AG04449 (cell line): ENCODE measurements at regions of chr19 and their contacts with region 1.

Region 1: DNA sequence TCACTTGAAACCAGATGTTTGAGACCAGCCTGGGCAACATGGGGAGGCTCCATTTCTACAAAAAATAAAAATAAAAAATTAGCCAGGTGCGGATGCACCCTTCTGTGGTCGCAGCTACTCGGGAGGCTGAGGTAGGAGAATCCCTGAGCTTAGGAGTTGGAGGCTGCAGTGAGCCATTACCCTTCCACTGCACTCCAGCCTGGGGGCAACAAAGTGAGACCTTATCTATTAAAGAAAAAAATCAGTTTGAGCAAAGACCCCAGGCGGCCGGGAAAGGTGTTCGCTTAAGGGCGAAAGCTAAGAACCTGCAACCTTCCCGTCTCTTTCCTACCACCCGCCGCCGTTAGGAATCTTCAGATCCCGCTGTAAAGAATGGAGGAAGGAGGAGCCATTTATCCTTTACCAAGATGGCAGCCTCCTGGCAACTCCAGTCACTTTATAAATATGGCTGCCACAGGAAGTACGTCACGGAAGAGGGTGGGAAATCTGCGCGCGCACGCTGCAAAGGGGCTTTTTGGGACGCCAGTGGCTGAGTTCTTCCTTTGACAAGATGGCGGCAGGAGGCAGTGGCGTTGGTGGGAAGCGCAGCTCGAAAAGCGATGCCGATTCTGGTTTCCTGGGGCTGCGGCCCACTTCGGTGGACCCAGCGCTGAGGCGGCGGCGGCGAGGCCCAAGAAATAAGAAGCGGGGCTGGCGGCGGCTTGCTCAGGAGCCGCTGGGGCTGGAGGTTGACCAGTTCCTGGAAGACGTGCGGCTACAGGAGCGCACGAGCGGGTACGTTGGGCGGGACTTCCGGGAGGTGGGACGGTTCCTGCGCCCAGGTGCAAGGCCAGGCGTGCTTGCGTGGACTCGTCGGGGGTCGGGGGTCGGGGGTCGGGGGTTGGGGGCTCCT is at the start of gene NOP53:
- DNase-seq: peak; percentile 85
- H3K4me3 ChIP-seq: peak within 1 kb of the TSS; percentile 78
- CTCF ChIP-seq: no peak

Region 2: GRCh38 chr19:47707135-47707925 is 37.9 kb before region 1 on chr19:
- CTCF ChIA-PET with region 1: interaction called, 211 read pairs
- POLR2A ChIA-PET with region 1: interaction called, 65 read pairs
- DNase-seq: no peak
- H3K4me3 ChIP-seq: no peak overlapping the region
- CTCF ChIP-seq: peak; percentile 94

Region 3: DNA sequence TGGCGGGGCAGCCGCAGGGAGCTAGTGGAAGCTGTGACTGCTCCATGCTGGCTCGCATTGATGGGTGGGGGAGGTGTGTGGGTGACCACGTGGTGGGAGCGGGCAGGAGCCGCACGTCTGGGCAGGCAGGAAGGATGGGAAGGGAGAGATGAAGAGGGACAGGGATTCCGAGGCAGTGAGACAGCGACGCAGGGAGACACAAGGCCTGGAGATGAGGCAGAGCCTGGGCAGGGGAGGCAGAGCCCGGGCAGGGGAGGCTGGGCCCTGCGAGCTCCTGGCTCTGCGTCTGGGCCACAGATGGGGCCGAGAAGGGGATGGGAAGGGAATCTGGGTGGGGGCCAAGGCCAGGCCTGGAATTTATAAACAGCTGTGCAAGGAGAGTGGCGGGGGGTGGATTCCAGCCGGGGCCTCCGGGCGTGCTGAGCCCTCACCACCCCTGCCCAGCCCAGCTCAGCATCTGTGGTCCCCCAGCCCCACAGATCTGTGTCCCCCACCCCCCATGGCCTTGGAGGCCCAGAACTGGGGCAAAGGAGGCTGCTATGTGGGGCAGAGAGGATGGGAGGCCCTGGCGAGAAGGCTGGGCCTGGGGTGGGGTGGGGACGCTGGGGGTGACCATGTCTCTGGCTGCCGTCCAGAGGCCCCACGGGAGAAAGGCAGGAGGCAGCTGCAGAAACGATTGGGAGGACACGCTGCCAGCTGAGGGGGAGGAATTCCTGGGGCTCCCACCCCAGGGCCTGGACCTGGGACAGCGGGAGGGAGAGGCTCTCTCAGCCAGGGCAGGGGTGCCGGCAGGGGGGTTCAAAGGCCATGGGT is 26.0 kb before region 1 on chr19:
- CTCF ChIA-PET with region 1: interaction called, 211 read pairs
- POLR2A ChIA-PET with region 1: interaction called, 75 read pairs
- DNase-seq: peak; percentile 98
- H3K4me3 ChIP-seq: peak overlapping the region; percentile 46
- CTCF ChIP-seq: no peak

Region 4: GRCh38 chr19:47729992-47730889 is 15.0 kb before region 1 on chr19:
- CTCF ChIA-PET with region 1: interaction called, 22 read pairs
- POLR2A ChIA-PET with region 1: interaction called, 6 read pairs
- DNase-seq: no peak
- H3K4me3 ChIP-seq: no peak overlapping the region
- CTCF ChIP-seq: no peak

Region 5: DNA sequence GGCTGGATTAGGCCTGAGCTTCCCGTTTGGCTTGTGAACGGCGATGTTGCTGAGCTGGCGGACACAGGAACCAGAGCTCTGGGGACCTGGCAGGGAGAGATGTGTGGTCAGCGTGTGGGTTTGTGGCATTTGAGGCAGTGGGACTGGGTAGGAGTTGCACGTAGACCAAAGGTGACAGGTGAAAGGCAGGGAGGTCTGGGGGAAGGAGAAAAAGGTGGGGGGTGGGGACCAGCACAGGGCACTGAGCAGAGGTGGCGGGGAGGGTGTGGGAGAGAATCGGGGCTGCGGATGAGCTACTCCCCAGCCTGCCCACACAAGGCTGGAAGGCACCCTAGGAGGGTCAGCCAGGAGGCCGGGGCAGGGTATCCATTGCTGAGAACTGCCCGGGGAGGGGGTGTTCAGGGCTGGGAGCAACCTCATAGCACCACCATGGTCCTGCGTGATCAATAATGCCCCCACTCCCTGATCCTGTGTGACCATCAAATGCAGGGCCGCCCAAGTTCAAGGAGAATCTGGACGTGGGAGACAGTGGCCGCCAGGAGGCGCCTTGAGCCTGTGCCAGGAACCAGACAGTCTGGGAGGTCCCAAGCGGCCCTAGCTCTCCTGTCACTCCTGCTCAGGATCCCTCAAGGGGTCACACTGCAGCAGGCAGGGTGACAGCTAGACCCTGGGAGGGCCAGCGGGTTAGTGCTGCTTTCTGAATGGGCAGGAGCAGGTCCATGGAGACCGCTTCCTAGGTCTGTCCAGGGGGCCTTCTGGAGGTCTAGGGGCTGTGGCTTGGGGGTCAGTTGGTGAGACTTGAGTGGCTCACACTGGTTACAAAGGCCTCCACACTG is 20.5 kb after region 1 on chr19:
- CTCF ChIA-PET with region 1: interaction called, 15 read pairs
- POLR2A ChIA-PET with region 1: interaction called, 3 read pairs
- DNase-seq: no peak
- H3K4me3 ChIP-seq: no peak overlapping the region
- CTCF ChIP-seq: peak; percentile 88

Region 6: GRCh38 chr19:47778954-47779351 is 33.7 kb after region 1 on chr19:
- CTCF ChIA-PET with region 1: no interaction called
- POLR2A ChIA-PET with region 1: no interaction called
- DNase-seq: no peak
- H3K4me3 ChIP-seq: peak overlapping the region; percentile 96
- CTCF ChIP-seq: no peak